BJ (cell line): ENCODE measurements at regions of chr15 and their contacts with region 1.

Region 1: GRCh38 chr15:79853458-79854328 is 43.1 kb downstream of the MTHFS start:
- DNase-seq: peak; percentile 44
- H3K4me3 ChIP-seq: no peak overlapping the region
- H3K27me3 ChIP-seq: no peaks in the 10 kb centered on the region
- CTCF ChIP-seq: peak; percentile 97

Region 2: GRCh38 chr15:79339564-79340314 is 514.0 kb before region 1 on chr15:
- CTCF ChIA-PET with region 1: interaction called, 46 read pairs
- POLR2A ChIA-PET with region 1: interaction called, 11 read pairs
- DNase-seq: peak; percentile 16
- H3K4me3 ChIP-seq: no peak overlapping the region
- H3K27me3 ChIP-seq: no peaks in the 10 kb centered on the region
- CTCF ChIP-seq: peak; percentile 91

Region 3: DNA sequence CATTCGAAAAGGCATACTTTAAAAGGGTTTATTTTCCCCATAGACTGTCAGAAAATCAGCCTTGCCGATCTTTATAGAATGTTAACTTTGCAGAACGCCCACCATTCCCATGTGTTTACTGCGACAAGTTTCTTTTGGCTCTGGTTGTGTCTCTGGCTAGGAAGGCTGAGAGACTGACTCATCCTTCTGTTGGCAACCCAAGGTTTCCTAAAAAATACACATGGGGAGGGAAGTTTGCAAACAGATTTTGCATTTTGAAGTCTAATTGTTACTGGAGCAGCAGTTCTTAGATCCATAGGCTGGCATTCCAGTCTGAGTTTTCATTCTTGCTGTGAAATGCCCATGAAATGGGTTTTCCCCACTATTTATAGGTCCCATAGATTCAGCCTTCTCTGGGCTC is 459.5 kb before region 1 on chr15:
- CTCF ChIA-PET with region 1: interaction called, 16 read pairs
- POLR2A ChIA-PET with region 1: no interaction called
- DNase-seq: peak; percentile 21
- H3K4me3 ChIP-seq: no peak overlapping the region
- H3K27me3 ChIP-seq: no peaks in the 10 kb centered on the region
- CTCF ChIP-seq: no peak

Region 4: DNA sequence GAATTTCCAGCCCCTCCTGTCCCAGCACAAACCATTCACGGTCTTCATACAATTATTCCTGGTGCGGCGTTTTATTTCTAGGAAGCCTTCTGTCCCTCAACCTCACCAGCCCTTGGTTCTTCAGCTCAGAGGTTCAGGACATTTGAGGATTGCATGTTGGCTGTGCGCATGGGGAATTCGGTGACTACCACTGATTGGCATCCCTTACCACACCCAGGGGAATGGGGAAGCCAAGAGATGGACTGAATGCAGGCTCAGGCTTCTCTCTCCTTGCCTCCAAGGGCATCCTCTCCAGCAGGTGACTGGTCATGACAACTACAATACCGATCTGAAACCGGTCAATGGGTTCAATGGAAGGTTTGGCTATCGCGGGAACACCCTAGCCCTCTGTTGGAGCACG is 110.7 kb before region 1 on chr15:
- CTCF ChIA-PET with region 1: no interaction called
- POLR2A ChIA-PET with region 1: no interaction called
- DNase-seq: no peak
- H3K4me3 ChIP-seq: no peak overlapping the region
- H3K27me3 ChIP-seq: no peaks in the 10 kb centered on the region
- CTCF ChIP-seq: no peak

Region 5: DNA sequence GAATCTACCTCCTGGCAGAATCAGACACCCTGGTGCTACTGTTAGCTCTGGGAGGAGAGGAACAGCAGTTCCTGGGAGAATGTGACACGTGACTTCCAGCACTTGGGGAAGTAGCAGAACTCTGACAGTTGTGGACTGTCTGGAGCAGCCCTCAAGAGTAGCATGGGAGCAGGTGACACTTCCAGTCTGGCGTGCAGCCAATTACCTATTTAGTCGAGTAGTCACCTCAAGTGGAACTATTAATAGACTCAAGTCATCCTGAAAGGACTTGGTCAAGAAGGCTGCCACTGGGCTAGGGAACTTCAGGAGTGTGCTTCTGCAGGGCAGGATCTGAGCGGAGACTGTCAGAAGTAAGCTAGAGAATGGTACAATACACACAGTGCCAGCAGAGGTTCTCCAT is 19.2 kb before region 1 on chr15:
- CTCF ChIA-PET with region 1: interaction called, 12 read pairs
- POLR2A ChIA-PET with region 1: no interaction called
- DNase-seq: no peak
- H3K4me3 ChIP-seq: no peak overlapping the region
- H3K27me3 ChIP-seq: no peaks in the 10 kb centered on the region
- CTCF ChIP-seq: no peak

Region 6: DNA sequence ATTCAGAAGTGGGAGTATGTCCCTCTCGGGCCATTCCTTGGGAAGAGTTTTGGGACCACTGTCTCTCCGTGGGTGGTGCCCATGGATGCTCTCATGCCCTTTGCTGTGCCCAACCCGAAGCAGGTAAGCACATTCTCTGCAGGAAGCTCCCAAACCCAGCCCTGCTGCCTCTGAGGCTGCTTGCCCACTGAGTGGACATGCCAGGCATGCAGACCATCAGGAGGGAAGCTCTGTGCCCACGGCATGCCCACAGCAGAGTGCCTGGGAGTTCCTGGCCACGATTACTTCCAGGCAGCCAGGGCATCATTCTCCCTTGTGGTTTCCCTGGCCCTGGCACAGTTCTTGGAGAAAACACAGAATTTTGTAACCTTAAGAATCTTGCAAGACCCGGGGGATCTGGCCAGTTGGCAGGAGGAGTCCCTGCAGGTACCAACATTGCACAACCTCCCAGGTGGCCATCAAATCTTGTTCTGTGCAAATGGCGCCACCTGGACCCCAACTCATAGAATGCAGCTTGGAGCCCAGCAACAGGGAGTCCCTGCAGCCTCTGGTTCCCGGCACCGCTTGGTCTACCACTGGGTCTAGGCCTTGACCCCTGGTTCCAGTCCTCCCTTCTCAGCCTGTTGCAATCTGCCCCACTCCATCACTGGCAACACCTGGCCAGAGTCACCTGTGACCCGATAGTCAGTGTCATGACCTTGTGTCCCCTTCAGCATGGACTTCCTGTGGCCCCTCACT is 319.5 kb after region 1 on chr15:
- CTCF ChIA-PET with region 1: interaction called, 12 read pairs
- POLR2A ChIA-PET with region 1: no interaction called
- DNase-seq: no peak
- H3K4me3 ChIP-seq: no peak overlapping the region
- H3K27me3 ChIP-seq: no peaks in the 10 kb centered on the region
- CTCF ChIP-seq: peak; percentile 70